HCT116 (cell line): ENCODE measurements at regions of chr9 and their contacts with region 1.

Region 1: DNA sequence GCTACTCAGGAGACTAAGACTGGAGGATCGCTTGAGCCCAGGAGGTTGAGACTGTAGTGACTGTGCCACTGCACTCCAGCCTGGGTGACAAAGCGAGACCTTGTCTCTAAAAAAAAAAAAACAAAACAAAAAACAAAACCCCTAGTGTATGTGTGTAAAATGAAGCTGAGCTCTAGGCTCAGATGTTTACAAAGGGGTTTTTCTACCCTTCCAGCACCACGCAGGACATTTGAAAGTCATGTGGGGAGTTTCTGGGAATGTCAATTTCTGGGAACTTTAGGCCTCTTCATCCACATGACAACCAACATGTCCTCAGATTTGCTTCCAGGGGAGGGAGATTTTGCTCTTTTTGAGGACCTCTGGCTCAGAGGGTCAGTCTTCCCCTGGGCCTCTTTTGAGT is 42.4 kb upstream of the AIF1L start:
- DNase-seq: no peak
- ATAC-seq: no peak
- H3K4me3 ChIP-seq: no peak overlapping the region
- H3K27ac ChIP-seq: no peak overlapping the region
- H3K4me1 ChIP-seq: no peaks in the 10 kb centered on the region
- H3K27me3 ChIP-seq: no peaks in the 10 kb centered on the region
- CTCF ChIP-seq: no peak
- POLR2A ChIP-seq: no peak
- RAD21 ChIP-seq: no peak

Region 2: GRCh38 chr9:131125128-131126058 is 71.5 kb after region 1 on chr9 and contains the start of gene NUP214:
- CTCF ChIA-PET with region 1: interaction called, 5 read pairs
- POLR2A ChIA-PET with region 1: no interaction called
- RAD21 ChIA-PET with region 1: interaction called in 1 of 2 experiments, 3 read pairs
- intact Hi-C with region 1: loop called (anchors 5 kb)
- DNase-seq: peak; percentile 94
- ATAC-seq: peak; percentile 99
- H3K4me3 ChIP-seq: peak within 1 kb of the TSS; percentile 91 to 99
- H3K27ac ChIP-seq: peak within 1 kb of the TSS; percentile 80
- H3K4me1 ChIP-seq: peaks cover 6 to 12% of the 10 kb centered on the region in 2 experiments; a peak in 3 of 4 replicates
- H3K27me3 ChIP-seq: no peaks in the 10 kb centered on the region
- CTCF ChIP-seq: no peak
- POLR2A ChIP-seq: peak; percentile 94
- RAD21 ChIP-seq: no peak
- total RNA-seq, gene NUP214: 35.5 TPM

Region 3: DNA sequence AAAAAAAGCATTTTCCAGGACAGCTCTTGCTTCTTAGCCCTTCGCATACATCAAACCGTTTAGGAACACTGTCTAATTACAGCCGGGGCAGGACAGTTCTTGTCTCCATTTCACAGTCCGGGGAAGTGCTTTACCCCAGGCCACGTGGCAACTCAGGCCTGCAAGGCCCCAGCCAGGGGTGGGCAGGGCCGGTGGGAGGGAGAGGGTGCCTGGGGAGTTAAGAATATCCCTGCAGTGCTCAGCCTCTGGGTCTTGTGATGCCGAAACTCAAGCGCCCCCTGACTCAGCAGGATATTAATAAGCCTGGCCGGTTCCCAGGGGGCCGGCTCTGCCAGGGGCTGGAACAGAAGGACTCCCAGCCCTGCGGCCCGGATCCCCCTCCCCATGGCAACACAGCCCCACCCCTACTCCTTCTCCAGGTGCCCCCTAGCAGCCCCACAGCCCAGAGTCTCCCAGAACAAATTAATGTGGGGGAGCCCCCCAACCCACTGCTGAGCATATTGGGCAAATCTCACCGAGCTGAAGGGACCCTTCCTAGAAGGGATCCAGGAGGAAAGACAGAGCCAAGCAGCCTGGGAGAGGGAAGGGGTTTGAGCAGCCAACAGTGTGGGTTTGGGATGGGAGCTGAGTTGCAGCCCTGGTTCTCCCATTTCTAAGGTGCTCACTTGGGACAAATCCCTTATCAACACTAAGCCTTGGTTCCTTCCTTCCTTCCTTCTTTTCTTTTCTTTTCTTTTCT is 280.9 kb after region 1 on chr9:
- CTCF ChIA-PET with region 1: interaction called, 45 read pairs
- POLR2A ChIA-PET with region 1: no interaction called
- RAD21 ChIA-PET with region 1: interaction called, 4 to 7 read pairs
- intact Hi-C with region 1: loop called (anchors 1 kb)
- DNase-seq: no peak
- ATAC-seq: no peak
- H3K4me3 ChIP-seq: no peak overlapping the region
- H3K27ac ChIP-seq: no peak overlapping the region
- H3K4me1 ChIP-seq: peaks cover 5 to 31% of the 10 kb centered on the region in 2 experiments
- H3K27me3 ChIP-seq: no peaks in the 10 kb centered on the region
- CTCF ChIP-seq: no peak
- POLR2A ChIP-seq: no peak
- RAD21 ChIP-seq: no peak